CD8-positive, alpha-beta T cell (primary cell): ENCODE measurements at regions of chr4 and their contacts with region 1.

Region 1: DNA sequence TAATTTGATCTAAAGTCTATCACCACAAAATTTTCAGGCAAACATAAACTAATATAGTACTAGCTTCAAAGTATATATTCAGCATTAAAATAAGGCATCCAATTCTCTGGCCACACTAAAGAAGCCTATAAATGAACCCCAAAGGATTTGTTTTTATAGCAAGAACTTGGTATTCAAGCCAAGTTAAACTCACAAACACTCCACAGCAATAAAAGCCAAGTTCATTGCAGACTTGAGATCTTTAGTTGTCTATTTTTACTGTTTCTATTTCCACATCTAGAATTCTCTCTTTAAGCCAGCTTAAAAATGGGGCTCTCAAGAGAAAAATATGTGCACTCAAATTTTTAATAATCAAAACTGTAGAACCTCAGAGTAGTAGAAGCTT is 51.1 kb downstream of the WDFY3 start:
- DNase-seq: no peak
- ATAC-seq: no peak
- H3K4me3 ChIP-seq: no peak overlapping the region
- H3K4me3 Mint-ChIP-seq: no peak overlapping the region
- H3K27ac ChIP-seq: no peak overlapping the region
- H3K27ac Mint-ChIP-seq: no peak overlapping the region
- H3K4me1 ChIP-seq: no peaks in the 10 kb centered on the region
- H3K4me1 Mint-ChIP-seq: no peaks in the 10 kb centered on the region
- H3K27me3 ChIP-seq: no peaks in the 10 kb centered on the region
- H3K27me3 Mint-ChIP-seq: no peaks in the 10 kb centered on the region
- CTCF ChIP-seq: no peak

Region 2: DNA sequence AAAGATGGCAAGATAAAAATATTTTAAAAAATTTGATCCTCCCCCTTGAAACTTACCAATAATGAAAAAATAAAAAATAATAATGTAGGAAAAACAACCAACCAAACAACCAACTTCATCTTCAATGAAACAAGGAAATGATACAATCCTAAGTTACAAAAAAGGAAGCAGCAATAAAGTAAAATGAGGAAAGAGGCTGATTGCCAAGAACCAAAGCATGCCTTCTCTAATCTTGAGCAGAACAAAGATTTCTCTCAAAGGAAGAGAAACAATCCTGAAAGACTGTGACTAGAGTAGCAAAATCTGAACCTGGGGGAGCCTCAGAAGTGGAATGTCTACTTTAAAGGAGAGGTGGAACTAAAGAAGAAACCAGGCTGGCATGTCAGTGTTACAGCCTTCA is 62.0 kb after region 1 on chr4:
- CTCF ChIA-PET with region 1: no interaction called
- POLR2A ChIA-PET with region 1: no interaction called
- intact Hi-C with region 1: loop called in 1 of 2 experiments (anchors 2 kb)
- DNase-seq: no peak
- ATAC-seq: no peak
- H3K4me3 ChIP-seq: no peak overlapping the region
- H3K4me3 Mint-ChIP-seq: no peak overlapping the region
- H3K27ac ChIP-seq: no peak overlapping the region
- H3K27ac Mint-ChIP-seq: no peak overlapping the region
- H3K4me1 ChIP-seq: no peaks in the 10 kb centered on the region
- H3K4me1 Mint-ChIP-seq: no peaks in the 10 kb centered on the region
- H3K27me3 ChIP-seq: no peaks in the 10 kb centered on the region
- H3K27me3 Mint-ChIP-seq: peaks cover 11% of the 10 kb centered on the region
- CTCF ChIP-seq: no peak

Region 3: DNA sequence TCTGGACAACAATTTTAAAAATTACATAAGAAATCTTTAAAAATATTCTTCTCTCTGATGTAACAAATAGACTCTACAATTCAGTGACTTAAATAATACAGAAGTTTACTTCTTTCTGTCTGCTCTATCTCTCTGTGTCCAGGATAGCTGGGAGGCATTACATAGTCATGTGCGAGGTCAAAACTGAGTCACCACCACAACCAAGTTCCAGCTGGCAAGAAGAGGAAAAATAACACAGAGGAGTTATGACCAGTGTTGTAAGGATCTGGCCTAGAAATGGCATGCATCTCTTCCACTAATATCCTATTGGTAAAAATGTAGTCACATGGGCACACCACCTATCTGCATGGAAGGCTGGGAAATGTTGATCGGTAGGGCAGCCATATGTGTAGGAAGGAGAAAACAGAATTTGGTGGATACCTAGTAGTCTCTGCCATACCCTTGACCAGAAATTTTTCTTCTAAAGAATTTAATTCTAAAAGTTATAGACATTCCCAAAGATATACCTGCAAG is 90.5 kb after region 1 on chr4:
- CTCF ChIA-PET with region 1: no interaction called
- POLR2A ChIA-PET with region 1: no interaction called
- intact Hi-C with region 1: no loop called
- DNase-seq: no peak
- ATAC-seq: no peak
- H3K4me3 ChIP-seq: no peak overlapping the region
- H3K4me3 Mint-ChIP-seq: no peak overlapping the region
- H3K27ac ChIP-seq: no peak overlapping the region
- H3K27ac Mint-ChIP-seq: no peak overlapping the region
- H3K4me1 ChIP-seq: no peaks in the 10 kb centered on the region
- H3K4me1 Mint-ChIP-seq: no peaks in the 10 kb centered on the region
- H3K27me3 ChIP-seq: no peaks in the 10 kb centered on the region
- H3K27me3 Mint-ChIP-seq: no peaks in the 10 kb centered on the region
- CTCF ChIP-seq: no peak

Region 4: GRCh38 chr4:85115851-85116407 is 200.5 kb after region 1 on chr4:
- CTCF ChIA-PET with region 1: no interaction called
- POLR2A ChIA-PET with region 1: no interaction called
- intact Hi-C with region 1: no loop called
- DNase-seq: no peak
- ATAC-seq: no peak
- H3K4me3 ChIP-seq: no peak overlapping the region
- H3K4me3 Mint-ChIP-seq: no peak overlapping the region
- H3K27ac ChIP-seq: no peak overlapping the region
- H3K27ac Mint-ChIP-seq: no peak overlapping the region
- H3K4me1 ChIP-seq: no peaks in the 10 kb centered on the region
- H3K4me1 Mint-ChIP-seq: no peaks in the 10 kb centered on the region
- H3K27me3 ChIP-seq: no peaks in the 10 kb centered on the region
- H3K27me3 Mint-ChIP-seq: no peaks in the 10 kb centered on the region
- CTCF ChIP-seq: no peak